ENCODE measurements at regions of chr11 and their contacts with region 1.

Region 1: DNA sequence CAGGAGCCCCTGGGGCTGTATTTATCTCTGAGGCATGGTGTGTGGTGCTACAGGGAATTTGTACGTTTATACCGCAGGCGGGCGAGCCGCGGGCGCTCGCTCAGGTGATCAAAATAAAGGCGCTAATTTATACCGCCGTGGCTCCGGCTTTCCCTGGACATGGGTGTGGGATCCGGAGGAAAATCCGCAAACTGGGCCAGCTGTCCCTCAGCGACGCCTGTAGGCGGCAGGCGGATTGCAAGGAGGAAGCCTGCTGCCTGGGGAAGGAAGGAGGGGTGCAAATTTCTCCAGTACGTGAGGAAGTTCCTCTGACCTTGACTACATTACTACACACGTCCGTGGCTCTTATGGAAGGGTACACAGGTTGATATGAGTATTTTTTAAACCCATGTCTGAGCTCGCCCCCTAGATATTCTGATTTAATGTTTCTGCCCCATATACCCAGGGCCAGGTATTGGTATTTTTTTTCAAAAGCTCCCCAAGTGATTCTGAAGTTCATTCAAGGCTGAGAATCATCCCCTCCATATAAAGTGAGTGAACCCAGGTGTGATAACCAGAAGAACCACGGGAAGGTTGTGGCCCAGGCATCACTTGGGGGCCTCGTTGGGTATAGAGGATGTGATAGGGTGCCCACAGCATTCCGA is 2.8 kb downstream of the MYOD1 start:
- DNase-seq: peak; percentile 11
- ATAC-seq: 0 out of 2 replicates have a peak, but pooled peaks have one; percentile 30
- H3K4me3 ChIP-seq: no peak overlapping the region
- H3K27ac ChIP-seq: no peak overlapping the region
- H3K4me1 ChIP-seq: no peaks in the 10 kb centered on the region
- H3K27me3 ChIP-seq: peaks cover 76% of the 10 kb centered on the region
- CTCF ChIP-seq: peak; percentile 40
- POLR2A ChIP-seq: no peak
- RAD21 ChIP-seq: peak; percentile 23; the same call in 1 of the 2 replicates

Region 2: GRCh38 chr11:17598700-17599459 is 123.2 kb before region 1 on chr11:
- CTCF ChIA-PET with region 1: interaction called, 3 read pairs
- POLR2A ChIA-PET with region 1: no interaction called
- dilution Hi-C with region 1: no loop called
- in situ Hi-C with region 1: loop called (anchors 5 kb)
- intact Hi-C with region 1: loop called (anchors 2 kb)
- DNase-seq: peak; percentile 55
- ATAC-seq: peak; percentile 98
- H3K4me3 ChIP-seq: no peak overlapping the region
- H3K27ac ChIP-seq: no peak overlapping the region
- H3K4me1 ChIP-seq: no peaks in the 10 kb centered on the region
- H3K27me3 ChIP-seq: peaks cover 7% of the 10 kb centered on the region
- CTCF ChIP-seq: peak; percentile 90
- POLR2A ChIP-seq: no peak
- RAD21 ChIP-seq: peak; percentile 90

Region 3: GRCh38 chr11:17610085-17610894 is 111.8 kb before region 1 on chr11:
- CTCF ChIA-PET with region 1: no interaction called
- POLR2A ChIA-PET with region 1: no interaction called
- dilution Hi-C with region 1: no loop called
- in situ Hi-C with region 1: no loop called
- intact Hi-C with region 1: no loop called
- DNase-seq: no peak
- ATAC-seq: no peak
- H3K4me3 ChIP-seq: no peak overlapping the region
- H3K27ac ChIP-seq: no peak overlapping the region
- H3K4me1 ChIP-seq: no peaks in the 10 kb centered on the region
- H3K27me3 ChIP-seq: no peaks in the 10 kb centered on the region; the same call in 1 of the 2 replicates
- CTCF ChIP-seq: no peak
- POLR2A ChIP-seq: no peak
- RAD21 ChIP-seq: no peak

Region 4: GRCh38 chr11:17686231-17686980 is 35.7 kb before region 1 on chr11:
- CTCF ChIA-PET with region 1: no interaction called
- POLR2A ChIA-PET with region 1: no interaction called
- dilution Hi-C with region 1: no loop called
- in situ Hi-C with region 1: no loop called
- intact Hi-C with region 1: loop called (anchors 1 kb)
- DNase-seq: no peak
- ATAC-seq: no peak
- H3K4me3 ChIP-seq: no peak overlapping the region
- H3K27ac ChIP-seq: no peak overlapping the region
- H3K4me1 ChIP-seq: no peaks in the 10 kb centered on the region
- H3K27me3 ChIP-seq: peaks cover 5% of the 10 kb centered on the region; the same call in 1 of the 2 replicates
- CTCF ChIP-seq: no peak
- POLR2A ChIP-seq: no peak
- RAD21 ChIP-seq: no peak

Region 5: GRCh38 chr11:17810746-17811145 is 88.6 kb after region 1 on chr11:
- CTCF ChIA-PET with region 1: no interaction called
- POLR2A ChIA-PET with region 1: no interaction called
- dilution Hi-C with region 1: no loop called
- in situ Hi-C with region 1: no loop called
- intact Hi-C with region 1: no loop called
- DNase-seq: peak; percentile 52
- ATAC-seq: peak; percentile 50; the same call in 1 of the 2 replicates
- H3K4me3 ChIP-seq: no peak overlapping the region
- H3K27ac ChIP-seq: no peak overlapping the region
- H3K4me1 ChIP-seq: peaks cover 10% of the 10 kb centered on the region
- H3K27me3 ChIP-seq: no peaks in the 10 kb centered on the region
- CTCF ChIP-seq: no peak
- POLR2A ChIP-seq: no peak
- RAD21 ChIP-seq: no peak

Region 6: DNA sequence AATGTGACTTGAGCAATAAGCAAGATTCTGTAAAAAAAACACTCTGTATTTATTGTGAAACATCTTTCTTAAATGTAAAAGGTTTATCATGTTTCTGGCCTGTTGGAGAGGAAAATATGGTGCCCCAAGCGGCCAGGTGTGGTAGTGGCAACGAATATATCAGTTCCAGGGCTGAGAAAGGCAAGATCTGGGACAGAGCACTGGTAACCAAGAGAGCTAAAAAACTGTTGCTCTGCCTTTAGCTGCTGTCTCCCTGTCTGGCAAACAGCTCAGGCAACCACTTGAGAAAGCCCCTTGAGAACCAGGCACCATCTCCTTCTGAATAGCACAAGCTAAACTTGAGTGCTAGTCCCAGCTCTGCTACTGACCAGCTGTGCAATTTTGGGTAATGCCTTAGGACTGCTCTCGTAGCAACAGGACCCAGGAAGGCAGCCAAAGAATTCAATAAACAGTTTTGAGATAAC is 142.4 kb after region 1 on chr11:
- CTCF ChIA-PET with region 1: no interaction called
- POLR2A ChIA-PET with region 1: no interaction called
- dilution Hi-C with region 1: no loop called
- in situ Hi-C with region 1: no loop called
- intact Hi-C with region 1: no loop called
- DNase-seq: no peak
- ATAC-seq: no peak
- H3K4me3 ChIP-seq: no peak overlapping the region
- H3K27ac ChIP-seq: no peak overlapping the region
- H3K4me1 ChIP-seq: peaks cover 2% of the 10 kb centered on the region; the same call in 1 of the 2 replicates
- H3K27me3 ChIP-seq: no peaks in the 10 kb centered on the region
- CTCF ChIP-seq: peak; percentile 26; the same call in 1 of the 2 replicates
- POLR2A ChIP-seq: no peak
- RAD21 ChIP-seq: no peak